Colonic mucosa (tissue), 4 donors: ENCODE measurements at regions of chr17 and their contacts with region 1.

Region 1: DNA sequence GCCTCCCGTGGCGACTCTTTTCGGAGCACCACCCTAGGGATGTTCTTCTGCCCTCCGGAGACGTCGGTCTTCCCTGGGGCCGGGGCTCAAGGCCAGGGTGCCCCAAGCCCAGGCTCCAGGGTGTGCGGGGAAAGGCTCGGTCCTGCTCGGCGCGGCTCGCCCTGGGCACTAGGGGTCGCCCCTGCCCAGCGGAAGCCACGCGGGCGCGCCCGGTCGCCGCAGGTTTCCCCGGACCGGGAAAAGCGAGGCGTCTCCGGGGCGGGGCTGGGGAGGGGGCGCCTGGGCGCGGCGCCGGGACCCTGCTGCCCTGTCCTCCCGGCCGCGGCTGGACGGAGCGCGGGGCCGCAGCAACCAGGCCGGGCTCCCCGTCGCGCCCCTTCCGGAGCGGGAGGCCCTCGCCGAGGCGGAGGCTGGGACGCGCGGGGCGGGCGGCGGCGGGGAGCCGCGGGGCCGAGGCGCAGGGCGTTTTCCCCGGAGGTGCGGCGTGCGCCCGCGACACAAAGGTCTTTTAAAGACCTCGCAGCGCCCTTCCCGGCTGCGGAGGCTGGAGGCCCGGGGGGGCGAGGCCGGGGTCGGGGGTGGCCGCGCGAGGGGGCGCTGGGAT is 76.4 kb downstream of the MRC2 start:
- DNase-seq: peak; percentile 67
- H3K4me3 ChIP-seq: peak overlapping the region; percentile 68
- H3K27ac ChIP-seq: no peak overlapping the region
- H3K4me1 ChIP-seq: peaks cover 4% of the 10 kb centered on the region
- H3K27me3 ChIP-seq: no peaks in the 10 kb centered on the region
- CTCF ChIP-seq: peak; percentile 75

Region 2: DNA sequence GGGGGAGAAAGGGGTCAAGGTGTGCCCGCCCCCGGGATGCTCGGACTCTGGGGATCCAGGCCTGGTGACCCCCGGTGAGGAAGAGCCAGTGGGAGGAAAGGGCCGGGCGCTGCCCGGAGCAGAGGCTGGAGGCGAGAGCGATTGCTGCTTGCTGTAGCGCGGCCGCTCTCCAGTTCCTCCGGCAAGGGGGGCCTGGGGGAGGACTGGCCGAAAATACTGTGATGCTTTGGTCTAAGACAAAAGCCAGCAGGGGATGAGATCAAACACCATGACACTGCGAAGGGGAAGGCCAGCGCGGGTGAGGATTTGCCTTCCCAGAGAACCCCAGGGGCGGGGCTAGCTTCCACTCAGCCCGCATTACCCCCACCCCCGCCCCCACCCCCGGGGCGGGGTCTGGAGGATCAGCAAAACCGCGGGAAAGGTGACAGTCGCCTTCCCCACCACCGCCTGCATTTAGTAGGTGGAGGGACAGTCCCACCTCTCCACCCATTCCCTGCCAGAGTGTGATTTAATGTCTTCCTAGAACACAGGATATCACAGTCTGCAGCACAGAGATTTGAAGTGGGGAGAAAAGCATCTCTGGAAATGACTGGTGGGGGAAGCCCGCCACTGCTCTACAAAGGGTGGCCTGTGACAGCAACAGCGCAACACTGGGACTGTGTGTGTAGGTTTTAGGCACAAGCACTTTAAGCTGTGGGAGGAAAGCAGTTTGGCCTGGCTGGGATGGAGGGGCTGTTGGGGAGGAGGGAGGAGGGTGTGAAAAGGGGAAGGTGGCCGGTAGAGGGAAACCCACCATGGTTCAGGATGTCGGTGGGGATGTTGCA is 50.7 kb before region 1 on chr17:
- intact Hi-C with region 1: no loop called
- DNase-seq: peak; percentile 80
- H3K4me3 ChIP-seq: peak overlapping the region; percentile 28
- H3K27ac ChIP-seq: peak overlapping the region; percentile 32
- H3K4me1 ChIP-seq: peaks cover 4% of the 10 kb centered on the region
- H3K27me3 ChIP-seq: no peaks in the 10 kb centered on the region
- CTCF ChIP-seq: no peak

Region 3: GRCh38 chr17:62819475-62820212 is 115.8 kb after region 1 on chr17:
- intact Hi-C with region 1: no loop called
- DNase-seq: no peak
- H3K4me3 ChIP-seq: no peak overlapping the region
- H3K27ac ChIP-seq: no peak overlapping the region
- H3K4me1 ChIP-seq: no peaks in the 10 kb centered on the region
- H3K27me3 ChIP-seq: no peaks in the 10 kb centered on the region
- CTCF ChIP-seq: no peak

Region 4: GRCh38 chr17:62970617-62971272 is 266.9 kb after region 1 on chr17:
- intact Hi-C with region 1: loop called (anchors 5 kb)
- DNase-seq: no peak
- H3K4me3 ChIP-seq: no peak overlapping the region
- H3K27ac ChIP-seq: no peak overlapping the region
- H3K4me1 ChIP-seq: peaks cover 3% of the 10 kb centered on the region
- H3K27me3 ChIP-seq: no peaks in the 10 kb centered on the region
- CTCF ChIP-seq: no peak